K562 (cell line): ENCODE measurements at regions of chr6 and their contacts with region 1.

Region 1: GRCh38 chr6:34684364-34684763 is 12.2 kb downstream of the ILRUN start:
- DNase-seq: no peak
- ATAC-seq: peak; percentile 22; the same call in 2 of the 3 replicates
- H3K4me3 ChIP-seq: no peak overlapping the region
- H3K27ac ChIP-seq: peak overlapping the region; percentile 1; the same call in 1 of the 3 replicates
- H3K4me1 ChIP-seq: peaks cover 16 to 22% of the 10 kb centered on the region in 2 experiments
- H3K27me3 ChIP-seq: no peaks in the 10 kb centered on the region
- CTCF ChIP-seq: peak in 1 of 3 experiments; percentile 20; a peak in 1 of 6 replicates
- EP300 ChIP-seq: no peak
- POLR2A ChIP-seq: no peak
- RAD21 ChIP-seq: no peak

Region 2: DNA sequence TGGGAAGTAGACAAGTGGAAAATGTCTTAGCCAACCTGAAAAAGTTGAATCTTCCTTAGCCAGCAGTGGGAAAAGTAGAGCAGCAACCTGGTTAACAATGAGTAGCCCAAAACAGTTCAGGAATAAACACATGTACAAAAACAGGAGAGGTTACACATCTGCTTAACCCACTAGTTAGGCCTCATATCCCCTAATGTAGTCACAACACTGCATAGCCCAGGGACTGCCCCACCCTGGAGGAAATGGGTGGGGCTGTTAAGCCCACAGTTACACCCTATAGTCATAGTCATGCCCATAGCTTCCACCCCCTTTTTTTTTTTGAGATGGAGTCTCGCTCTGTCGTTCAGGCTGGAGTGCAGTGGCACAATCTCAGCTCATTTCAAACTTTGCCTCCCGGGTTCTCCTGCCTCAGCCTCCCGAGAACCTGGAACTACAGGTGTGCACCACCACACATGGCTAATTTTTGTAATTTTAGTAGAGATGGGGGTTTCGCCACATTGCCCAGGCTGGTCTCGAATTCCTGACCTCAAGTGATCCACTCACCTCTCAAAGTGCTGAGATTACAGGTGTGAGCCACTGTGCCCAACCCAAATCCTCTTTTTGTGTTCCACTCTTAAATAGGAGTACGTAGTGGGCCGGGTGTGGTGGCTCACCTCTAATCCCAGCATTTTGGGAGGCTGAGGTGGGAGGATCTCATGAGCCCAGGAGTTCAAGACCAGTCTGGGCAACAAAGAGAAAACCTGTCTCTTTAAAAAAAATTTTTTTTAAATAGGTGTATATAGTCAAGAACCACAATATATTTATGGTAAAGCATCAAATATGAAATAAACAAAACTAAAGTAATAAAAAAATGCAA is 12.3 kb before region 1 on chr6:
- CTCF ChIA-PET with region 1: no interaction called
- POLR2A ChIA-PET with region 1: interaction called, 11 read pairs
- in situ Hi-C with region 1: no loop called
- intact Hi-C with region 1: no loop called
- DNase-seq: peak; percentile 84 to 92 (median 87)
- ATAC-seq: peak; percentile 98
- H3K4me3 ChIP-seq: no peak overlapping the region
- H3K27ac ChIP-seq: peak overlapping the region; percentile 82
- H3K4me1 ChIP-seq: peaks cover 15 to 40% of the 10 kb centered on the region in 2 experiments
- H3K27me3 ChIP-seq: no peaks in the 10 kb centered on the region
- CTCF ChIP-seq: no peak
- EP300 ChIP-seq: peak; percentile 39; the same call in 1 of the 2 replicates
- POLR2A ChIP-seq: no peak
- RAD21 ChIP-seq: peak in 1 of 2 experiments; percentile 7; a peak in 1 of 4 replicates

Region 3: DNA sequence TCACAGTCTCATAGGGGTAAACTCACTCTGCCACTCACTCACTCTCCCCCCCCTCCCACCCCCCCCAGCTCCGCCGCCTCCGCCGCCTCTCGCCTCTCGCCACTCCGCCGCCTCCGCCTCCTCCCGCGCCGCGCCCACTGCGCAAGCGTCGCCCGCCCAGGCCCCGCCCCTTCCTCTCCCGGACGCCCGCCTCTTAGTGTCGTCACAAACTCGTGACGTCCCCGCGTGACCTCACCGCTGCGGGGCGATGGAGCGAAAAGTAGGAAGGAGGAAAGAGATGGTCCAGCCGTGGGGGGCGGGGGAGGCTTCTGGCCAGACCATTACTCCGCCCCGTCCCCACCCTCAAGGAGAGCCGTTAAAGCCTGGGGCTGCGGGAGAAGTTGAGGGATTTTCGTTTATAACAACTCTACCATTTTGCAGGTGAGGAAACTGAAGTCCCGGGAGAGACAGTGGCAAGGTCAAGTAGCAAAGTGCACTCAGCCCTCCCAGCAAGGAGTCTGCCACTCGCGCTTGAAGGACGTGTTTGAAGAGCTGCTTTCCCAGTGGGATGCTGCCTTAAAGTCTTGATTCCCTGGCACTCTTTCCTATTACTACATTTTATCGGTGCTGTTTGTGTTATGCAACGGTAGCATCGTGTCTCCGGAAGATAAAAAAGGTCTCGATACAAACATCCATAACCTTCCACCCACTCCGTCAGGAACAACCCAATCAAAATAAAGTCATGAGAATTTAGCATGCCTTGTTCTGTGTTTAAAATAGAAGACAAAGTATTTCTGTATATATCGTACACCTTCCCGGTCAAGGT is 12.6 kb after region 1 on chr6 and contains the start of gene ILRUN:
- CTCF ChIA-PET with region 1: no interaction called
- POLR2A ChIA-PET with region 1: interaction called, 16 read pairs
- in situ Hi-C with region 1: no loop called
- intact Hi-C with region 1: no loop called
- DNase-seq: peak; percentile 96 to 100 (median 98)
- ATAC-seq: peak; percentile 89
- H3K4me3 ChIP-seq: peak within 1 kb of the TSS; percentile 98
- H3K27ac ChIP-seq: peak within 1 kb of the TSS; percentile 89
- H3K4me1 ChIP-seq: peaks cover 17 to 22% of the 10 kb centered on the region in 2 experiments; a peak in 4 of 5 replicates
- H3K27me3 ChIP-seq: no peaks in the 10 kb centered on the region
- CTCF ChIP-seq: no peak
- EP300 ChIP-seq: no peak
- POLR2A ChIP-seq: peak; percentile 84
- RAD21 ChIP-seq: peak; percentile 7 to 14; a peak in 2 of 4 replicates
- polyA plus RNA-seq, gene ILRUN: 24.9 to 30.7 TPM